Naive thymus-derived CD4-positive, alpha-beta T cell (primary cell): ENCODE measurements at regions of chr1 and their contacts with region 1.

Region 1: GRCh38 chr1:222420633-222421032 is 127.3 kb downstream of the HHIPL2 start:
- DNase-seq: peak in 7 of 9 donors; percentile 62 to 84 (median 79)
- ATAC-seq: peak; percentile 93
- H3K4me3 ChIP-seq: peak overlapping the region; percentile 44
- H3K4me3 Mint-ChIP-seq: peak overlapping the region; percentile 50 to 83 (median 76)
- H3K27ac ChIP-seq: peak overlapping the region; percentile 50
- H3K27ac Mint-ChIP-seq: peak overlapping the region; percentile 85 to 99 (median 95)
- H3K4me1 ChIP-seq: peaks cover 36 to 62% of the 10 kb centered on the region in 2 donors
- H3K4me1 Mint-ChIP-seq: peaks cover 35 to 92% (median 80%) of the 10 kb centered on the region in 7 donors
- H3K27me3 ChIP-seq: no peaks in the 10 kb centered on the region
- H3K27me3 Mint-ChIP-seq: no peaks in the 10 kb centered on the region

Region 2: DNA sequence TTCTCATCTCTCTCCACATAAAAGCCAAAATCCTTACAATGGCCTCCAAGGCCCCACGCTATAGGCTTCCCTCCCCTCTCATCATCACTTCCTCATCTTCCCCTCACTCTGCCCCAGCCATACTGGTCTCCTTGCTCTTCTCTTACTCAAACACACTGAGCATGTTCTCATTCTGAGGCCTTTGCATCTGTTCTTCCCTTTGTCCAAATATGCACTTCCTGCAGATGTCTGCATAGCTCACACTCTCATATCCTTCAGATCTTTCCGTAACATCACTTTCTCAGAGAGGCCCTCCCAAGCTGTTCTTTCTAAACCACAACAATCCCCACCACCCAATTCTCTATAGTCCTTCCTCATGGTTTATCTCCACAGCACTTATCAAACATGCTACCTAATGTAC is 156.8 kb before region 1 on chr1:
- CTCF ChIA-PET with region 1: no interaction called
- POLR2A ChIA-PET with region 1: no interaction called
- intact Hi-C with region 1: no loop called
- DNase-seq: peak in 6 of 9 donors; percentile 41 to 69 (median 48)
- ATAC-seq: peak; percentile 59
- H3K4me3 ChIP-seq: no peak overlapping the region
- H3K4me3 Mint-ChIP-seq: no peak overlapping the region
- H3K27ac ChIP-seq: no peak overlapping the region
- H3K27ac Mint-ChIP-seq: no peak overlapping the region
- H3K4me1 ChIP-seq: peaks cover 0 to 18% of the 10 kb centered on the region in 2 donors
- H3K4me1 Mint-ChIP-seq: peaks cover 0 to 19% (median 9%) of the 10 kb centered on the region in 7 donors
- H3K27me3 ChIP-seq: no peaks in the 10 kb centered on the region
- H3K27me3 Mint-ChIP-seq: peaks cover 0 to 5% (median 0%) of the 10 kb centered on the region in 5 donors

Region 3: DNA sequence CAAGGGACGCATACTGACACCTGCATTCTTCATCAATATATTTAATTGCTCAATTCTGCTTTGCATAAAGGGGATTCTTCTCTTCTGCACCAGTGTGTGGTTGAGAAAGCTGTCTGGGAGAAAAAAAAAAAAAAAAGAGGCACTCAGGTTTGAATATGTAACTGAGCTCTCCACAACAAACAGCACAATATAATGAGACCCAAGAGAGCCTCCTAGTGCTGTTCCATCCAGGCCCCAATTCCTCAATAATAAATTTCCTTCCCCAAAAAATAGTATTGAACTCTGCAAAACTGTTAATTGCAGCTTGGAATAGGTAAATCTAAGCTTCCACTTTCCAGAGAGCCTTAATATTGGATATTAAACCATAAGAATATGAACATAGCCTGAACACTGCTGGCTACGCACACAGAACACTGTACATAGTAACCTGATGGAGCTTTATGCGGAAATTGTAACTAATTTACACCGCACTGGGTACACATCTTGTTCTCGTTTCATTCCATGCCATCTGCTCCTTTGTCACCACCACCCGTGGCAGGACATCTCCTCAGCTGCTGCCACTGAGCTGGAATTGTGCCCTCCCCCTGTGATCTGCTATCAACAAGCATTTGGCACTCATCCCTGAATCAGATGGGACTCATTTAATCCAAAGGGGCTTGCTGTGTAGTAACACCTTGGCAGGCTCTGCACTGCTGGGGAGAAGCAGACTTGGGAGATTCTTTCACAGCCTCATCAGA is 144.7 kb before region 1 on chr1:
- CTCF ChIA-PET with region 1: interaction called, 3 read pairs
- POLR2A ChIA-PET with region 1: no interaction called
- intact Hi-C with region 1: loop called in 1 of 2 experiments (anchors 10 kb)
- DNase-seq: no peak
- ATAC-seq: no peak
- H3K4me3 ChIP-seq: no peak overlapping the region
- H3K4me3 Mint-ChIP-seq: no peak overlapping the region
- H3K27ac ChIP-seq: no peak overlapping the region
- H3K27ac Mint-ChIP-seq: peak overlapping the region in 1 of 9 donors; percentile 4
- H3K4me1 ChIP-seq: no peaks in the 10 kb centered on the region
- H3K4me1 Mint-ChIP-seq: no peaks in the 10 kb centered on the region
- H3K27me3 ChIP-seq: no peaks in the 10 kb centered on the region
- H3K27me3 Mint-ChIP-seq: peaks cover 0 to 3% (median 0%) of the 10 kb centered on the region in 5 donors

Region 4: DNA sequence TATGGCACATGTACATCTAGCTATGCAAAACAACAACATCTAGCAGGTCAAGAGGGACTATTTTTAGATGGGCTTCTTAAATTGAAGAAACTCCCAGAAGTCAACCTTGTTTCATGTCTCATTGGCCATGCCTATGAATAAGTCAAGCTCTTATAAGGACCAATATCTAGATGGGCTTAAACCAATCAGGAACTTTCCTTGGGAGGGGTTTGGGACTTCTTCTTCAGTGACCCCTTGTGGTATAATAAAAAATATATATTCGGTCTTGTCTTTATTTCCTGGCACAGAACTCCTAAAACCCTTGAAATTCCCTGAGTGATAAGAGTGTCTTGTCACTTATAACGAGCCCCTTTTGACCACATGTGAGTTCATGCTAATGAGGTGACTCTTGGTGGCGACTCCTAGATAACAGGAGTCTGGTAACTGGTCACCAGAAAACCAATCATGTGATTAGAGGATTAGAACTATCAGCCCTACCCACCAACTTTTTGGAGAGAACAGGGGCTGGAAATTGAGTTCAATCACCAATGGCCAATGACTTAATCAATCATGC is 91.1 kb before region 1 on chr1:
- CTCF ChIA-PET with region 1: no interaction called
- POLR2A ChIA-PET with region 1: no interaction called
- intact Hi-C with region 1: loop called in 1 of 2 experiments (anchors 2 kb)
- DNase-seq: no peak
- ATAC-seq: no peak
- H3K4me3 ChIP-seq: no peak overlapping the region
- H3K4me3 Mint-ChIP-seq: no peak overlapping the region
- H3K27ac ChIP-seq: no peak overlapping the region
- H3K27ac Mint-ChIP-seq: no peak overlapping the region
- H3K4me1 ChIP-seq: no peaks in the 10 kb centered on the region
- H3K4me1 Mint-ChIP-seq: peaks cover 0 to 25% (median 15%) of the 10 kb centered on the region in 7 donors
- H3K27me3 ChIP-seq: no peaks in the 10 kb centered on the region
- H3K27me3 Mint-ChIP-seq: peaks cover 0 to 2% (median 0%) of the 10 kb centered on the region in 5 donors

Region 5: DNA sequence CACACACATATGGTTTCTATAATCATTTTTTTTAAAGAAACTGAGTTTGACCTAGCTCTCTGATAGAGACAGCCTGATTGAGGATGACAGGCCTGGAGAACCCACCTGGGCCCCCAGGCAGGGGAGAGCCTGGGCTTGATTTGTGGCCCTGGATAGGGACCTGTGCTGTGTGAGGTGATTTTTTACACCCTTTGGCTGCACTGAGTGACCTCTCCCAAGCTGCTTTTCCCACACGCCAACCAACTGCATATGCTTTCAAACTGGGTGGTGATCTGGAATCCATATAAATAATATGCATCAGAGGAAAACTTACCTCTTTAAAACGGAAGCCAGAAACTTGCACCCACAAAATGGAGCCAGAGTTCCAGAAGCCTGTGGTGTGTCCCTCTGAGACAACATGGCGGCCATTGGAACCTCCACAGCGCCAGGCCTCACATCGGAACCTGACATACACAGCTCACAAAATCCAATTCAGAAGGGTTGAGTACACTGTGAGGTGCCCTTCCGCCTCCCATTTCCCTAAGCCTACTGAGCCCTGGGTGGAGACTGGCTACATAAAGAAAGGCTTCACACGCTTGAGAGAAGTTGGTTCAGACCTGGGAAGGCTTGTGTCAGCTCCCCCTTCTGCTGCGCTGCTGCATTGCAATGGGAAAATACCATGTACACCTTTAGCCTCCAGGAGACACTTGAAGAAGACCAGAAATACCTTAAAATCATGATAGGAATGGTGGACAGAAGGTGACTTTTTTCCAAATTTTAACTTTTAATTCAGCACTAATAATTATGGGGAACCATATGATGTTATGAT is 33.4 kb before region 1 on chr1:
- CTCF ChIA-PET with region 1: no interaction called
- POLR2A ChIA-PET with region 1: no interaction called
- intact Hi-C with region 1: loop called in 1 of 2 experiments (anchors 5 kb)
- DNase-seq: no peak
- ATAC-seq: no peak
- H3K4me3 ChIP-seq: no peak overlapping the region
- H3K4me3 Mint-ChIP-seq: no peak overlapping the region
- H3K27ac ChIP-seq: no peak overlapping the region
- H3K27ac Mint-ChIP-seq: peak overlapping the region in 1 of 9 donors; percentile 51
- H3K4me1 ChIP-seq: peaks cover 0 to 6% of the 10 kb centered on the region in 2 donors
- H3K4me1 Mint-ChIP-seq: peaks cover 0 to 46% (median 31%) of the 10 kb centered on the region in 7 donors
- H3K27me3 ChIP-seq: no peaks in the 10 kb centered on the region
- H3K27me3 Mint-ChIP-seq: peaks cover 0 to 8% (median 0%) of the 10 kb centered on the region in 5 donors

Region 6: DNA sequence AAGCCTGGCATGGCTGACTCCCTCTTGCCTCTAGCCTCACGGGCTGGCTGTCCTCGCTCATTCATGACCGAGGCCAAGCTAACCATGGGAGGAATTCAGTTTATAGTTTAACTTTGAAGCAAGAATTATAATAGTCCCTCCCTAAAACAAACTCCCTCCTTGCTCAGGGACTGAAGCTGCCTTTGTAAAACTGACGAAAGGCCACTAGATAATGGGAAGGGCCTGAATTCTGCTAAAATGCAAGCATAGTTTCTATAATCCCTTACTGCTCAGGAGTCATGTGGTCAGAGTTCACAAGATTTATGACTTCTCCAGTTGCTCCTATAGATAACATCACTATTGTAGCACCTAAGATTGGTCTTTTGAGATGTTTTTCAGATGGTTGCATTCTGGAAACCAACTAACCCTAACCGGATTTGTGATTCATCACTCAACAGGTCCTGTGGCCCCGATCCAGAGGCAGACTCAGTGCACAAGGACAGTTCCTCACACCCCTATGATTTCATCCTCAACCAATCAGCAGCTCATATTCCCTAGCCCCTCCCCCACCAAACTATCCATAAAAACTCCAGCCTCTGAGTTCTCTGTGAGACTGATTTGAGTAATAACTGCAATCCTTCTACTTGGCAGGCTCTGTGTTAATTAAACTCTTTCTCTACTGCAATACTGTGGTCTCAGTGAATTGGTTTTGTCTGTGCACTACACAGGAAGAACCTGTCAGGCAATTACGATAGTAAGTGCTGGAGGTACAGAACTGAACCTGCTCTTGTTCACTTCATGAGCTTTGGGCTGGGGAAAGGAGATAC is 100.9 kb after region 1 on chr1:
- CTCF ChIA-PET with region 1: no interaction called
- POLR2A ChIA-PET with region 1: no interaction called
- intact Hi-C with region 1: no loop called
- DNase-seq: no peak
- ATAC-seq: no peak
- H3K4me3 ChIP-seq: no peak overlapping the region
- H3K4me3 Mint-ChIP-seq: no peak overlapping the region
- H3K27ac ChIP-seq: no peak overlapping the region
- H3K27ac Mint-ChIP-seq: peak overlapping the region in 1 of 9 donors; percentile 8
- H3K4me1 ChIP-seq: no peaks in the 10 kb centered on the region
- H3K4me1 Mint-ChIP-seq: no peaks in the 10 kb centered on the region
- H3K27me3 ChIP-seq: no peaks in the 10 kb centered on the region
- H3K27me3 Mint-ChIP-seq: peaks cover 0 to 6% (median 4%) of the 10 kb centered on the region in 5 donors